IMR-90 (cell line): ENCODE measurements at regions of chr4 and their contacts with region 1.

Region 1: GRCh38 chr4:119559044-119559647 is 69.5 kb downstream of the PDE5A start:
- DNase-seq: peak; percentile 57
- ATAC-seq: 0 out of 2 replicates have a peak, but pooled peaks have one; percentile 8
- H3K4me3 ChIP-seq: no peak overlapping the region
- H3K27ac ChIP-seq: no peak overlapping the region
- H3K4me1 ChIP-seq: no peaks in the 10 kb centered on the region; the same call in 1 of the 2 replicates
- H3K27me3 ChIP-seq: no peaks in the 10 kb centered on the region
- CTCF ChIP-seq: peak; percentile 51
- POLR2A ChIP-seq: no peak
- RAD21 ChIP-seq: peak; percentile 59

Region 2: GRCh38 chr4:119585771-119586170 is 26.6 kb after region 1 on chr4:
- CTCF ChIA-PET with region 1: no interaction called
- POLR2A ChIA-PET with region 1: interaction called, 11 read pairs
- dilution Hi-C with region 1: no loop called
- in situ Hi-C with region 1: no loop called
- intact Hi-C with region 1: no loop called
- DNase-seq: peak; percentile 80
- ATAC-seq: peak; percentile 10
- H3K4me3 ChIP-seq: no peak overlapping the region
- H3K27ac ChIP-seq: no peak overlapping the region
- H3K4me1 ChIP-seq: peaks cover 10% of the 10 kb centered on the region
- H3K27me3 ChIP-seq: no peaks in the 10 kb centered on the region
- CTCF ChIP-seq: no peak
- POLR2A ChIP-seq: no peak
- RAD21 ChIP-seq: no peak

Region 3: GRCh38 chr4:119615068-119615719 is 56.0 kb after region 1 on chr4:
- CTCF ChIA-PET with region 1: no interaction called
- POLR2A ChIA-PET with region 1: no interaction called
- dilution Hi-C with region 1: no loop called
- in situ Hi-C with region 1: no loop called
- intact Hi-C with region 1: loop called (anchors 5 kb)
- DNase-seq: no peak
- ATAC-seq: peak; percentile 18
- H3K4me3 ChIP-seq: no peak overlapping the region
- H3K27ac ChIP-seq: 0 out of 2 replicates have a peak overlapping the region, but pooled peaks have one; percentile 41
- H3K4me1 ChIP-seq: peaks cover 16% of the 10 kb centered on the region
- H3K27me3 ChIP-seq: no peaks in the 10 kb centered on the region
- CTCF ChIP-seq: no peak
- POLR2A ChIP-seq: no peak
- RAD21 ChIP-seq: no peak

Region 4: DNA sequence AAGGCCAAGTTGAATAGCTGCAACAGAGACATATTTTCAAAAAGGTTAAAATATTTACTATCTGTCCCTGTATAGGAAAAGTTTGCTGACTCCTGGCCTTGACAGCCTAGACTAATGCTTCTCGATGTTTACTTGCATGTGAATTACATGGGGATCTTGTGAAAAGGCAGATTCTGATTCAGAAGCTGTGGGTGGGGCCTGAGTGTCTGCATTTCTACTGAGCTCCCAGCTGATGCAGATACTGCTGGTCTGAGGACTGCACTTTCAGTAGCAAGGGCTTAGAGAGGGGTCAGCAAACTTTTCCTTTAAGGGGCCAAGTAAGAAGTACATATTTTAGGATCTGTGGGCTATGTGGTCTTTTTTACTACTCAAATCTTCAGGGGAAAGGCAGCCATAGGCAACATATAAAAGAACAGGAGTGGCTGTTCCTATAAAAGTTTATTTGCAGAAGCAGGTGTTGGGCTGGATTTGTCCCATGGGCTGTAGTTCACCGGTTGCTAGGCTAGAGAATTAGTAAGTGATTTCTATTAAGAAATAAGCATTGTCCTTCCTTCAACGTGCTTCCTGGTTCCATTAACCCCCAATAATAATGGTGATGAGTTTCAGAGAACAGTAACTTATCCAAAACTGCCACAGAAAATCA is 166.7 kb after region 1 on chr4:
- CTCF ChIA-PET with region 1: no interaction called
- POLR2A ChIA-PET with region 1: no interaction called
- dilution Hi-C with region 1: no loop called
- in situ Hi-C with region 1: no loop called
- intact Hi-C with region 1: no loop called
- DNase-seq: peak; percentile 70
- ATAC-seq: peak; percentile 60
- H3K4me3 ChIP-seq: no peak overlapping the region
- H3K27ac ChIP-seq: peak overlapping the region; percentile 1; the same call in 1 of the 2 replicates
- H3K4me1 ChIP-seq: peaks cover 20% of the 10 kb centered on the region
- H3K27me3 ChIP-seq: no peaks in the 10 kb centered on the region
- CTCF ChIP-seq: no peak
- POLR2A ChIP-seq: no peak
- RAD21 ChIP-seq: no peak

Region 5: GRCh38 chr4:120049732-120050494 is 490.8 kb after region 1 on chr4:
- CTCF ChIA-PET with region 1: no interaction called
- POLR2A ChIA-PET with region 1: no interaction called
- dilution Hi-C with region 1: no loop called
- in situ Hi-C with region 1: loop called (anchors 10 kb)
- intact Hi-C with region 1: loop called (anchors 10 kb)
- DNase-seq: peak; percentile 92
- ATAC-seq: peak; percentile 84
- H3K4me3 ChIP-seq: peak overlapping the region; percentile 21; the same call in 1 of the 2 replicates
- H3K27ac ChIP-seq: peak overlapping the region; percentile 85
- H3K4me1 ChIP-seq: peaks cover 4% of the 10 kb centered on the region
- H3K27me3 ChIP-seq: no peaks in the 10 kb centered on the region
- CTCF ChIP-seq: peak; percentile 87
- POLR2A ChIP-seq: no peak
- RAD21 ChIP-seq: peak; percentile 95